HCT116 (cell line): ENCODE measurements at regions of chr11 and their contacts with region 1.

Region 1: DNA sequence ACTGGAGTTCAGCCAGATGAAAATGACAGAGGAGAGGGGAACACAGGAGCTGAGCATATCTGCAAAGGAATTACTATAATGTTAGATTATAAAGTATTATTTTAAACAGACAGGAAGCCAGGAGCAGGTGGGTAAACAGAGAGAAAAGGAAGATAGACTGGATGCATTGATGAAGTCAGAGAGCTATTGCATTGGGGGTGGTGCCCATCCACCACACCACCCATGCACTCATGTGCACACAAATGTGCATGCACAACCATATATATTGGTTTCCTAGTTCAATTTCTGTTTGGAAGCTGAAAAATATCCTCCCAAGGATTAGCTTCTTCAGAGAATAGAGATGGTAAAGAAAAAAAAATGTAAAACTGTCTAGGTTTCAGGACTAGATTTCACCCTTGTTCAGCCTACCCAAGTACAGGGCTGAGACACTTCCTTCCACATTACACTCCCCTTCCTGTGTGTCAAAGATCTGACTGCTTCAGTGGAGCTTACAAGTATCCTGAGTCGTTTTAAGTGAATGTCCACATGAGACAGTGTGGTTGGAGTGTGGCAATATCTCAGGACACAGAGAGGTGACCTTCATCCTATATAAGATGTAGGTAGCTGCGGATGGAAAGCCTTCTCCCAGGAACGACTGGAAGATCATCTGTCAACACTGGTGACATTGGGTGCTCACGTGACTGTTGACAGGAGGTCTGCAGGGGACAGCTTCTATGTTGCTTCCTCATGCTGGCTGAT is 12.2 kb upstream of the SMPD1 start:
- DNase-seq: no peak
- ATAC-seq: no peak
- H3K4me3 ChIP-seq: no peak overlapping the region
- H3K27ac ChIP-seq: no peak overlapping the region
- H3K4me1 ChIP-seq: peaks cover 0 to 4% of the 10 kb centered on the region in 2 experiments; a peak in 1 of 4 replicates
- H3K27me3 ChIP-seq: no peaks in the 10 kb centered on the region
- CTCF ChIP-seq: no peak
- POLR2A ChIP-seq: no peak
- RAD21 ChIP-seq: no peak

Region 2: GRCh38 chr11:6156628-6157359 is 221.3 kb before region 1 on chr11:
- CTCF ChIA-PET with region 1: no interaction called
- POLR2A ChIA-PET with region 1: no interaction called
- RAD21 ChIA-PET with region 1: no interaction called
- intact Hi-C with region 1: no loop called
- DNase-seq: no peak
- ATAC-seq: no peak
- H3K4me3 ChIP-seq: no peak overlapping the region
- H3K27ac ChIP-seq: no peak overlapping the region
- H3K4me1 ChIP-seq: no peaks in the 10 kb centered on the region
- H3K27me3 ChIP-seq: peaks cover 4% of the 10 kb centered on the region; the same call in 1 of the 2 replicates
- CTCF ChIP-seq: no peak
- POLR2A ChIP-seq: no peak
- RAD21 ChIP-seq: no peak

Region 3: GRCh38 chr11:6333112-6333511 is 45.0 kb before region 1 on chr11:
- CTCF ChIA-PET with region 1: no interaction called
- POLR2A ChIA-PET with region 1: no interaction called
- RAD21 ChIA-PET with region 1: no interaction called
- intact Hi-C with region 1: no loop called
- DNase-seq: no peak
- ATAC-seq: no peak
- H3K4me3 ChIP-seq: no peak overlapping the region
- H3K27ac ChIP-seq: no peak overlapping the region
- H3K4me1 ChIP-seq: no peaks in the 10 kb centered on the region
- H3K27me3 ChIP-seq: no peaks in the 10 kb centered on the region
- CTCF ChIP-seq: no peak
- POLR2A ChIP-seq: no peak
- RAD21 ChIP-seq: no peak

Region 4: GRCh38 chr11:6362873-6363678 is 15.0 kb before region 1 on chr11:
- CTCF ChIA-PET with region 1: interaction called, 37 read pairs
- POLR2A ChIA-PET with region 1: no interaction called
- RAD21 ChIA-PET with region 1: no interaction called
- intact Hi-C with region 1: no loop called
- DNase-seq: peak; percentile 68
- ATAC-seq: peak; percentile 100
- H3K4me3 ChIP-seq: no peak overlapping the region
- H3K27ac ChIP-seq: no peak overlapping the region
- H3K4me1 ChIP-seq: peaks cover 0 to 6% of the 10 kb centered on the region in 2 experiments; a peak in 1 of 4 replicates
- H3K27me3 ChIP-seq: no peaks in the 10 kb centered on the region
- CTCF ChIP-seq: peak; percentile 79 to 98 (median 90)
- POLR2A ChIP-seq: no peak
- RAD21 ChIP-seq: peak; percentile 93

Region 5: GRCh38 chr11:6443269-6444003 is 65.4 kb after region 1 on chr11:
- CTCF ChIA-PET with region 1: interaction called, 98 read pairs
- POLR2A ChIA-PET with region 1: interaction called, 3 read pairs
- RAD21 ChIA-PET with region 1: interaction called, 12 to 21 read pairs
- intact Hi-C with region 1: loop called (anchors 1 kb)
- DNase-seq: no peak
- ATAC-seq: peak; percentile 93
- H3K4me3 ChIP-seq: no peak overlapping the region
- H3K27ac ChIP-seq: no peak overlapping the region
- H3K4me1 ChIP-seq: no peaks in the 10 kb centered on the region
- H3K27me3 ChIP-seq: no peaks in the 10 kb centered on the region
- CTCF ChIP-seq: peak; percentile 68 to 89 (median 87)
- POLR2A ChIP-seq: no peak
- RAD21 ChIP-seq: peak; percentile 79

Region 6: GRCh38 chr11:6505577-6506240 is 127.6 kb after region 1 on chr11:
- CTCF ChIA-PET with region 1: interaction called, 83 read pairs
- POLR2A ChIA-PET with region 1: interaction called, 3 read pairs
- RAD21 ChIA-PET with region 1: interaction called, 3 to 4 read pairs
- intact Hi-C with region 1: loop called (anchors 1 kb)
- DNase-seq: peak; percentile 40
- ATAC-seq: peak; percentile 94
- H3K4me3 ChIP-seq: no peak overlapping the region
- H3K27ac ChIP-seq: no peak overlapping the region
- H3K4me1 ChIP-seq: peaks cover 0 to 7% of the 10 kb centered on the region in 2 experiments; a peak in 2 of 4 replicates
- H3K27me3 ChIP-seq: no peaks in the 10 kb centered on the region
- CTCF ChIP-seq: peak; percentile 73 to 92 (median 74)
- POLR2A ChIP-seq: no peak
- RAD21 ChIP-seq: peak; percentile 75

Region 7: DNA sequence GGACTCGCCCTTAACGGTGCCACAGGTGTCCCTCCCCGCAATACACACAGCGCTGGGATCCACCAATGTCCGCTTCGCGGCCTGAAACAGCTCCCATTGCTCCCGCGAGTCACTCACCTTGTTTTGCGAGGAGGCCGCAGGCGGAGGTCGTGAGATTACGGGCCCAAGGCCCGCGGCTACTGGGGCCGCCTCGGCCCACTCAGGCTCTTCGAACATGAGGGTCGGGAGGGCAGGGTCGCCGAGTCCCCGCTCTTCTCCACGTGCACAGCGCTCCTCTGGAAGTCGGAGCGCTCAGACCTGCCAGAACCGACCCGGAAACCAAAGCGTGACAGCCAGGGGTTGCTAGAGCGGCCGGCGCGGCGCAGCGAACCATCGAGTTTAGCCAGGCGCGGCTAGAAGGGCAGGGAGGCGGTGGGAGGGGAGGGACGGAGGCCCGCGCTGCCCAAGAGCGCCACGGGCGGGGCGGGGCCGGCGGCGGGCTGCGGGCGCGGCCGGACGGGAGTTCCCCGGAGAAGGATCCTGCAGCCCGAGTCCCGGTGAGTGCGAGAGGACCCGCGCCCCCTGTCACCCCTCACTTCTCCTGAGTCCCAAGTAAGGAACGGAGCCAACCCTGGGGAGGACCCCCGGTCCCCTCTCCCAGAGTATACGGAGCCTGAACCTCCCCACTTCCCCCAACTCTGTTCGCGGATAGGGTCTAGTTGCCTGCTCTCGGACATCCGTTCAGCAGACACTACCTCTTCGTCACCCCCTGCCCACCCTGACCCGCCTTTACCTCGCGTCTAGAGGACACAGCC is 225.4 kb after region 1 on chr11 and contains the starts of genes ILK and RRP8:
- CTCF ChIA-PET with region 1: interaction called, 3 read pairs
- POLR2A ChIA-PET with region 1: no interaction called
- RAD21 ChIA-PET with region 1: no interaction called
- intact Hi-C with region 1: loop called (anchors 1 kb)
- DNase-seq: peak; percentile 68
- ATAC-seq: peak; percentile 88
- H3K4me3 ChIP-seq: peak within 1 kb of the TSS; percentile 81 to 96
- H3K27ac ChIP-seq: peak within 1 kb of the TSS; percentile 66
- H3K4me1 ChIP-seq: peaks cover 18 to 45% of the 10 kb centered on the region in 2 experiments
- H3K27me3 ChIP-seq: no peaks in the 10 kb centered on the region
- CTCF ChIP-seq: no peak
- POLR2A ChIP-seq: peak; percentile 68
- RAD21 ChIP-seq: no peak
- total RNA-seq, gene ILK: 73.5 TPM
- total RNA-seq, gene RRP8: 17.8 TPM

Region 8: DNA sequence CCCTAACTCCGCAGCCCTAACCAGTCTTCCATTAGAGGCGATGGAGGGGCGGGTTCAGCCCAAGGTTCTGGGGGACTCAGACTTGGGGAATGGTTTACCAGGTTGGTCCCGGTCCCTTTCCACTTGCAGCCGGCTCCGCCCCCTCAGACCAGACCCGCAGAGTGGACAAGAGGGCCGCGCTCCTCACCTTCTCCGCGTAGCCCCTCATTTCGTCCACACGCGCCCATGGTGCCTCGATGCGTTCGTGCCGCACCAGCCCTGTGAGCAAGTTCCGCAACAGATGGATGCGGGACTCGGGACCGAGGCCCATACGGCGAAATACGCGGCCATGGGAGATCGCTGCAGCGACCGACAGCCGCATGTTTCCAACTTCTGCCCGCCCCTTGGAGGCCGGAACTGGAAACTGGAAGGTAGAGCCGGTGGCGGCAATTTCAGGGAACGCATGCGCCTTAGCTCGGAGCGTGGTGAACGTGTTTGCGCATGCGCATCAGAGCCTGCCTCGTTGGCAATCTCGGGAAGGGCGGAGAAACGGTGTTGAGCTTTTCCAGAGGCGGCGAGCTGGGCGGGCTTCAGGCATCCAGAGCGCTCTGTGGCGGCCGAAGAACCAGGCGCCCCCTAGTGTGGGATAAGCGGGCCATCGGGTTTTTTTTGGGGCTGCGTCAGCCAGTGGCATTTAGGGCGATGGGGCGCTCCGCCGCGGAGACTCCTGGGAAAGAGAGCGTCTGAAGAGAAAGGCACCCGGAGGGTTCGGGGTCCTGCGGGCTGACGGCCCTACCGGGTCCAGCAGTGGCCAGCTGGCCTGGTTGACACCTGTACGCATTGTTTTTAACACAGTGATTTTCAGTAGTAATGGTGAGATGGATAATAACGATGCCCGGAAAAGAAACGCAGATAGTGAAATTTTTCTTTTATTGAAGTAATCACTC is 305.1 kb after region 1 on chr11 and contains the start of gene MRPL17:
- CTCF ChIA-PET with region 1: interaction called, 27 read pairs
- POLR2A ChIA-PET with region 1: no interaction called
- RAD21 ChIA-PET with region 1: no interaction called
- intact Hi-C with region 1: loop called (anchors 1 kb)
- DNase-seq: peak; percentile 99
- ATAC-seq: peak; percentile 96
- H3K4me3 ChIP-seq: peak within 1 kb of the TSS; percentile 71 to 92
- H3K27ac ChIP-seq: peak within 1 kb of the TSS; percentile 66
- H3K4me1 ChIP-seq: peaks cover 7 to 15% of the 10 kb centered on the region in 2 experiments; a peak in 3 of 4 replicates
- H3K27me3 ChIP-seq: no peaks in the 10 kb centered on the region
- CTCF ChIP-seq: peak; percentile 84 to 91 (median 85)
- POLR2A ChIP-seq: peak; percentile 95
- RAD21 ChIP-seq: peak; percentile 81
- total RNA-seq, gene MRPL17: 75.0 TPM

Region 9: DNA sequence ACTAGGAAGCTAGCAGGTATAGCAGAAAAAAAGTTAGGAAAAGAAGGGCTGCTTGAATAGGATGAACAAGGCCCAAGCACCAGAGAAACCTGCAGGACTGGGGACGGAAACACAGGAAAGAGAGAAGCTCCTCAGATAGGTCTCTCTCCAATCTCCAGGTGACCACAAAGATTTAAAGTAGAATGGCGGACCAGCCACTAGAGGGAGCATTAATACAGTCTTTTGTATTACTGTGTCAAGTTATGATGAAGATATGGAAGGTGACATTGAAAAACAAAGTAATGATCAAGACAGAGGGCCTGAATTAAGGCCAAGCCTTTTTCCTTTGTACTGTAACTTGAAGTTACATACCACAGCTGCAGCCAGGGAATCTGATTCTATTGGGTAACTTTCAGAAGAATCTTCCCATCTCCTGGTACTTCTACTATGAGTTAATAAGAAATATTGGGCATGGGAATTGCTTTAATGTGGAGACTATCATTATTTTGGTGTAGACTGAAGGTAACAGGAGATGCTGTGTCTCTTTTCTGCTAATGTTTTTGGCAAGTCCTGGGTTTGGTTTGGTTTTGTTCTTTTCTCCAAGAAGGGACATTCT is 359.9 kb after region 1 on chr11:
- CTCF ChIA-PET with region 1: interaction called, 10 read pairs
- POLR2A ChIA-PET with region 1: no interaction called
- RAD21 ChIA-PET with region 1: no interaction called
- intact Hi-C with region 1: no loop called
- DNase-seq: peak; percentile 43
- ATAC-seq: peak; percentile 95
- H3K4me3 ChIP-seq: no peak overlapping the region
- H3K27ac ChIP-seq: no peak overlapping the region
- H3K4me1 ChIP-seq: no peaks in the 10 kb centered on the region
- H3K27me3 ChIP-seq: peaks cover 59% of the 10 kb centered on the region
- CTCF ChIP-seq: peak; percentile 41 to 77 (median 58)
- POLR2A ChIP-seq: no peak
- RAD21 ChIP-seq: peak; percentile 55; the same call in 1 of the 2 replicates